ENCODE measurements at regions of chr6 and their contacts with region 1.

Region 1: DNA sequence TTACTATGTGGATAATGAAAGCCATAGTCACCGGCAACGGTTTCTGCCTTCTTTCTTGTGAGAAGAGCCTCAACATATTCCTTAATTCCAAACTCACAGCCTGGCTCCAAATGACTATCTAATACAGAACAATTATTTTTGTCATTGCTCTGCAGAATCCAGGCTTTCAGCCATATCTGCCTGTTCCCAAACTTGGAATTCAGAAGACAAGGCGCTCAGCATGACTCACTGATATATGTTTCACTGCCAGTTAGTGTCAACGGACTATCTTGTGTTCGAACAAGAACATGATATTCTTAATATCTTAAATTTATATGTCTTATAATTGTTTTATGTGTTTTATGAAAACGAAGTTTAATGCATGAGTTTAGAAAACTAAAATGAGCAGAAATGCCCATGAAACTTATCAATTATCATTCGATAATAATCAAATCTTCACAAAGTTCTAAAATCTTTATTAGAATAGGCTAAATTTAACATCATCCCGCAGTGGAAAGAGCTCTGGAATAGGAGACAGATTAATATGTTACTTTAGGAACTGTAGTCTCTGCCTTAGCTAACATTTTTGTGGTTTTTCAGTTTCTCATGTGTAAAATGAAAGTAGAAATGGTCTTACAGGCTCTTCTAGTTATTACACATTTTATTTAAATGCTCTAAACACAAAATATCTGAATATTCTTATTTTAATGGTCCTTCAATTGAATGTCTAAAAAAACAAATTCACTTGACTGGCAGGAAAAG is 669.3 kb upstream of the GJE1 start:
- DNase-seq: no peak
- H3K4me3 ChIP-seq: no peak overlapping the region
- H3K27ac ChIP-seq: no peak overlapping the region
- H3K4me1 ChIP-seq: no peaks in the 10 kb centered on the region
- H3K27me3 ChIP-seq: no peaks in the 10 kb centered on the region
- CTCF ChIP-seq: no peak
- POLR2A ChIP-seq: no peak

Region 2: GRCh38 chr6:141483598-141484061 is 20.2 kb after region 1 on chr6:
- CTCF ChIA-PET with region 1: no interaction called
- POLR2A ChIA-PET with region 1: no interaction called
- dilution Hi-C with region 1: no loop called
- intact Hi-C with region 1: loop called (anchors 2 kb)
- DNase-seq: peak; percentile 80
- H3K4me3 ChIP-seq: peak overlapping the region in 1 of 3 experiments; percentile 30
- H3K27ac ChIP-seq: peak overlapping the region; percentile 25
- H3K4me1 ChIP-seq: peaks cover 14% of the 10 kb centered on the region
- H3K27me3 ChIP-seq: no peaks in the 10 kb centered on the region
- CTCF ChIP-seq: no peak
- POLR2A ChIP-seq: no peak

Region 3: DNA sequence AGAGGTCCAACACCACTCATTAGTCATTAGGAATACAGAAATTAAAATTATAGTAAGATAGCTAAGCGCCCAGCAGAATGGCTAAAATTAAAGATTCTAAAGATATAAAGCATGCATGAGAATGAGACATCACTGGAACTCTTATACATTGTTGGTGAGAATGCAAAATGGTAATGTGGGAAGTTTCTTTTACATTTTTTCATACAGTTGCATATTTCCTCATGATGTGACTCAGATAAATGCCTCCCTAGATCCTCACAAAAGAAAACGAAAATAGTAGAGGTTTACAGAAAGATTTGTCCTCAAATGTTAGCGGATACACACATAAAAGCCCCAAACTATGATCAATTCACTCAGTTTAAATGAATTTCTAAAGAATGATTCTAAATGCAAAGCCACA is 35.6 kb after region 1 on chr6:
- CTCF ChIA-PET with region 1: no interaction called
- POLR2A ChIA-PET with region 1: no interaction called
- dilution Hi-C with region 1: no loop called
- intact Hi-C with region 1: no loop called
- DNase-seq: no peak
- H3K4me3 ChIP-seq: no peak overlapping the region
- H3K27ac ChIP-seq: no peak overlapping the region
- H3K4me1 ChIP-seq: peaks cover 3% of the 10 kb centered on the region
- H3K27me3 ChIP-seq: no peaks in the 10 kb centered on the region
- CTCF ChIP-seq: no peak
- POLR2A ChIP-seq: no peak

Region 4: GRCh38 chr6:141809901-141810300 is 346.5 kb after region 1 on chr6:
- CTCF ChIA-PET with region 1: no interaction called
- POLR2A ChIA-PET with region 1: no interaction called
- dilution Hi-C with region 1: no loop called
- intact Hi-C with region 1: no loop called
- DNase-seq: no peak
- H3K4me3 ChIP-seq: no peak overlapping the region
- H3K27ac ChIP-seq: no peak overlapping the region
- H3K4me1 ChIP-seq: no peaks in the 10 kb centered on the region
- H3K27me3 ChIP-seq: no peaks in the 10 kb centered on the region
- CTCF ChIP-seq: no peak
- POLR2A ChIP-seq: no peak

Measured in endothelial cell of umbilical vein (primary cell).